OCI-LY7 (cell line): ENCODE measurements at regions of chr22 and their contacts with region 1.

Region 1: DNA sequence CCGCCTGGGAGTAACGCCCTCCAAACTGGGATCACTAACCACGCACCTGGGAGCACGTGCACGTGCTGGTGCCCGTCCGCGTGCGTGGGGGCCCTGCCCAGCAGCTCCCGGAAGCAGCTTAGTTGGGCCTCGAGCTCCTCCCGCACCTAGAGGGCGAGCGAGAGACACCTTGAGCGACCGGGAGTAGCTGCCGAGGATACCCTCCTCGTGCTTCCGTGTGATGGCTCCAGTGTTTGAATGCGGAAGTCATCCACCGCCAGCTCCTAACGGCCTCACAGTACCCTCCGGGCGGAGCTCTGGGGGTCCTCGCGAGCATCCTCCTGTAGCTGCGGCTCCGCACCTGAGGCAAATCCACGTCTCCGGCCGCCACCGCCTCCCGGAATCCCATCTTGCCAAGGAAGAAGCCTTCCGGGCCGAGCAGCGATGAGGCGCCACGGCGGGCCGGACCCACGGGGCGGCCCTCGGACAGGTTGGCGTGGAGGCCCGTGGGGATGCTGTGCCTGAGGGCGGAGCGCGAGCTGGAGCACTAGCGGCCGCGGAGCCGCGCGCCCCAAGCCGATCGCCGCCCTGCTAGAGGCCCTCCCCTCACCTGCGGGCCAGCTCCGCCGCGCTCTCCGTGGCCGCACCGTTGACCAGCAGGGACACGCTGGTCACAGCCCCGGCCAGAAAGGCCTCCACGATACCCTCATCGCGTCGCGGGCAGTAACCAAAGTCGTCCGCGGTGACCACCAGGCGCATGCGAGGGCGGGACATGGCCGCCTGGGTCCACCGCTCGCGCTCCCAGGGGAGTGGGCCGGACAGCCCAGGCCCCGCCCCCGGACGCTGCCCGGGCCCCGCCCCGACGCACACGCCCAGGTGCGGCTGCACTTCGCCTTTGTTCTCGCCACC is at the start of gene YDJC:
- DNase-seq: peak; percentile 98
- H3K4me3 ChIP-seq: peak within 1 kb of the TSS; percentile 89
- H3K27ac ChIP-seq: peak within 1 kb of the TSS; percentile 87
- H3K4me1 ChIP-seq: peaks cover 66% of the 10 kb centered on the region
- CTCF ChIP-seq: peak; percentile 80
- total RNA-seq, gene YDJC: 75.6 and 81.1 TPM in 2 replicates

Region 2: GRCh38 chr22:21641789-21642583 is 12.5 kb after region 1 on chr22 and contains the start of gene SDF2L1:
- CTCF ChIA-PET with region 1: interaction called, 18 read pairs
- POLR2A ChIA-PET with region 1: interaction called, 17 read pairs
- intact Hi-C with region 1: loop called (anchors 1 kb)
- DNase-seq: peak; percentile 99
- H3K4me3 ChIP-seq: peak within 1 kb of the TSS; percentile 83
- H3K27ac ChIP-seq: peak within 1 kb of the TSS; percentile 35
- H3K4me1 ChIP-seq: peaks cover 19% of the 10 kb centered on the region
- CTCF ChIP-seq: no peak
- total RNA-seq, gene SDF2L1: 66.8 and 89.1 TPM in 2 replicates